CD4-positive, alpha-beta memory T cell (primary cell): ENCODE measurements at regions of chr17 and their contacts with region 1.

Region 1: DNA sequence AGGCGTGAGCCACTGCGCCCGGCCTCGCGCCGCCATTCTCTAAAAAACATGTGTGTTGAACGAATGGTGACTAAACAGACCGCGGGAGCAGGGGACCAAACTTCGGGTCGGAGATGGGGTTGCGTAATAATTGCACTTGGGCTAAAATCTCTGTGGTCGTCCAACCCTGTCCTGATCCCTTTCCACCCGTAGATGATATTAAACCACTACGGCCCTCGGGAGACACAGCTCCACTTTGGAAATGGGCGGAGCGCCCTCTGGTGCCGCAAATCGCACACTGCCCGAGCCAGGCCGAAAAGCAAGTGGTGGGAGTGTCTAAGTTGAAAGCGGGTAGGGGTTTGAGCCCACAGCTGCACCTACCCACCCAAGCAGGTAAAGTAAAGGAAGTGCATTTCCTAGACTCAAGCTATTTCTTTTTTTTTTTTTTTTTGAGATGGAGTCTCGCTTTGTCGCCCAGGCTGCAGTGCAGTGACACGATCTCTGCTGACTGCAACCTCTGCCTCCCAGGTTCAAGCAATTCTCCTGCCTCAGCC is 17.0 kb downstream of the CAVIN1 start:
- DNase-seq: peak; percentile 76 to 81 (median 79)
- H3K4me3 ChIP-seq: no peak overlapping the region
- H3K4me3 Mint-ChIP-seq: no peak overlapping the region
- H3K27ac ChIP-seq: no peak overlapping the region
- H3K27ac Mint-ChIP-seq: peak overlapping the region in 6 of 7 donors; percentile 19 to 68 (median 38)
- H3K4me1 ChIP-seq: peaks cover 4% of the 10 kb centered on the region
- H3K4me1 Mint-ChIP-seq: peaks cover 8 to 17% (median 10%) of the 10 kb centered on the region in 4 donors
- H3K27me3 ChIP-seq: no peaks in the 10 kb centered on the region
- H3K27me3 Mint-ChIP-seq: no peaks in the 10 kb centered on the region

Region 2: DNA sequence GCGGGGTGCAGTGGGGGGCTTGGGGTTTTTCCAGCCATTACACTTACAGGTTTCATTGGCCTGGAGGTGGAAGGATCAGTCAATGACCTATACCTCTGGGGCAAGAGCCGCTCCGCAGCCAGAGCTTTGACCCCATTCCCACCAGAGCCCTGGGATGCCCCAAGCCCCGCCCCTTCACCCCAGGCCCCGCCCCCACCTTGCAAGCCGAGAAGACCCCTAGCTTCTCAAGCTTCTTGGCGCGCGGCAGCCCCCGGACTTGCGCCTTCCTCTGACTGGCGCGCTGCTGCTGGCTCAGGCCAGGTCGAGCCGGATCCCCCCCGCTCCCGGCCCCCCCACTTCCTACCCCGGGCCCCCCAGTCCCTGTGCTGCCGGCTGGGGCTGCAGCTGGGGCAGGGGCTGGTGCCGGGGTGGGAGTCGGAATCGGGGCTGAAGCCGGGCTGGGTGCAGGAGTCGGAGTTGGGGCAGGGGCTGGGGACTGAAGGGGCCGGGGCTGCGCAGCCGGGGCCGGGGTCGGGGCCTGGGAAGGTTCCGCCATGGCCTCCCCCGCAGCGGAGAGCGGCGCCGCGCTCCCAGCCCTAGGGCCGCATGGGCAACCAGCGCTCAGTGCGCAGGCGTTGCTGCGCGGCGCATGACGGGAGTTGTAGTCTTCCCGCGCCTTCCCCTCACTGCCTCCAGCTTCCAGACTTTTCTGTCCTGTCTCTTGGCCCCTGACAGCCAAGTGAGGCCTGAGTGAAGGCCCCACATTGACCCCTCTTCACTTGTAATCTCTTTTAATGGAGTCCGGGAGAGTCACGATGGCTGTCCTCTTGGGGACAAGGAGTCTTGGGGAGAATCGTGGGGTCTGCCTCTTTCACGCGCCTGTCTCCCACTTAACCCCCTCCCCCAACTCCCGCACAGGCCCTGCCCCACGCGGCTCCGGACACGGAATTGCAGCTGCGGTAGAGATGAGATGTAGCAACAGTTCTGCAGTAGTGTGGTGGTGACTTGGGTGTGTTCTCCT is 285.0 kb before region 1 on chr17 and contains the start of gene KAT2A:
- CTCF ChIA-PET with region 1: no interaction called
- POLR2A ChIA-PET with region 1: no interaction called
- intact Hi-C with region 1: loop called (anchors 2 kb)
- DNase-seq: peak; percentile 61 to 71 (median 68)
- H3K4me3 ChIP-seq: peak within 1 kb of the TSS in 1 of 2 donors; percentile 43
- H3K4me3 Mint-ChIP-seq: peak within 1 kb of the TSS; percentile 72 to 82 (median 77)
- H3K27ac ChIP-seq: peak within 1 kb of the TSS; percentile 49
- H3K27ac Mint-ChIP-seq: peak within 1 kb of the TSS in 6 of 7 donors; percentile 19 to 81 (median 67)
- H3K4me1 ChIP-seq: peaks cover 11% of the 10 kb centered on the region
- H3K4me1 Mint-ChIP-seq: peaks cover 13 to 34% (median 23%) of the 10 kb centered on the region in 4 donors
- H3K27me3 ChIP-seq: no peaks in the 10 kb centered on the region
- H3K27me3 Mint-ChIP-seq: no peaks in the 10 kb centered on the region
- total RNA-seq, gene KAT2A: 38.5 to 39.9 TPM

Region 3: GRCh38 chr17:42183741-42184711 is 222.0 kb before region 1 on chr17:
- CTCF ChIA-PET with region 1: no interaction called
- POLR2A ChIA-PET with region 1: no interaction called
- intact Hi-C with region 1: no loop called
- DNase-seq: peak; percentile 74 to 84 (median 75)
- H3K4me3 ChIP-seq: peak overlapping the region; percentile 63 to 86
- H3K4me3 Mint-ChIP-seq: peak overlapping the region; percentile 87 to 96 (median 91)
- H3K27ac ChIP-seq: peak overlapping the region; percentile 72
- H3K27ac Mint-ChIP-seq: peak overlapping the region; percentile 78 to 94 (median 88)
- H3K4me1 ChIP-seq: peaks cover 56% of the 10 kb centered on the region
- H3K4me1 Mint-ChIP-seq: peaks cover 21 to 52% (median 35%) of the 10 kb centered on the region in 4 donors
- H3K27me3 ChIP-seq: no peaks in the 10 kb centered on the region
- H3K27me3 Mint-ChIP-seq: peaks cover 0 to 5% of the 10 kb centered on the region in 2 donors

Region 4: DNA sequence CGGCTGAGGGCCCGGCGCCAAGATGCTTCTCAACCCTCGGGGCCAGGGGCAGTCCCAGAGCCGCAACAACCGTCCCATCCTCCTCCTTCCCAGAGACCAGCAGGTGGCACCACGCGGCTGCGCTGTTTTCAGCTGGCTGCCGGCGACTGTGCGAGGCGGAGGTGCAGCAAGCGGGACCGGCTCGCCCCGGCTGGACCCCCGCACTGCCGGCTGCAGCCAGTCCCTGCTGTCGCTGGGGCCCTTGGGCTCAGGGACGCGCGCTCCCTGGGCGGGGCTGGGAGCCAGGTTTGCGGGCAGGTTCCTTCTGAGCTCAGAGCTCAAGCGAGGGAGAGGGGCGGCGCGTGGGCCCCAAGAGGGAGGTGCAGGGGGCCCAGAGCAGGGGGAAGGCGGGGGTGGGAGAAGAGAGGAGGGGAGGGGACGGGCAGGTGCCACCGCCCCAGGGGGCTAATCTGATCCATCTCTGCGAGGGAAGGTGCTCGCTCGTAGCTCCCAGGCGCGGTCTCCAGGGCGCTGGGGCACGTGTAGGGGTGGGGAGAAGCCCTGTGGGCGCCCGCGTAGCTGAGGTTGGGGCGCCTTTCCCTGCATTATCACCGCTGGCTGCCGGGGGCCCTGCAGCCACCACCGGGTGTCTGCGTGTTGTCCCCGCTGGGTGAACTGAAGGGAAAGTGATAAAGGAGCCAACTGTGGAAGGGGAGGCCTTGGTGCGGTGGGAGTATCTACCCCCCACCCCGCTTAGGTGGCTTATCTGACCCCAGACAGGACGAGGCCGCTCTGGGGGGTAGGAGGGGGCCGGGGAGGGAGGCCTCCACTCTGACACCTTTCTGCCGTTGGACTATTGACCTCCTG is 93.5 kb before region 1 on chr17:
- CTCF ChIA-PET with region 1: interaction called, 504 read pairs
- POLR2A ChIA-PET with region 1: interaction called, 16 read pairs
- intact Hi-C with region 1: no loop called
- DNase-seq: peak; percentile 69 to 80 (median 73)
- H3K4me3 ChIP-seq: peak overlapping the region in 1 of 2 donors; percentile 11
- H3K4me3 Mint-ChIP-seq: peak overlapping the region; percentile 37 to 80 (median 70)
- H3K27ac ChIP-seq: peak overlapping the region; percentile 46
- H3K27ac Mint-ChIP-seq: peak overlapping the region; percentile 75 to 89 (median 86)
- H3K4me1 ChIP-seq: peaks cover 70% of the 10 kb centered on the region
- H3K4me1 Mint-ChIP-seq: peaks cover 40 to 75% (median 53%) of the 10 kb centered on the region in 4 donors
- H3K27me3 ChIP-seq: no peaks in the 10 kb centered on the region
- H3K27me3 Mint-ChIP-seq: no peaks in the 10 kb centered on the region

Region 5: DNA sequence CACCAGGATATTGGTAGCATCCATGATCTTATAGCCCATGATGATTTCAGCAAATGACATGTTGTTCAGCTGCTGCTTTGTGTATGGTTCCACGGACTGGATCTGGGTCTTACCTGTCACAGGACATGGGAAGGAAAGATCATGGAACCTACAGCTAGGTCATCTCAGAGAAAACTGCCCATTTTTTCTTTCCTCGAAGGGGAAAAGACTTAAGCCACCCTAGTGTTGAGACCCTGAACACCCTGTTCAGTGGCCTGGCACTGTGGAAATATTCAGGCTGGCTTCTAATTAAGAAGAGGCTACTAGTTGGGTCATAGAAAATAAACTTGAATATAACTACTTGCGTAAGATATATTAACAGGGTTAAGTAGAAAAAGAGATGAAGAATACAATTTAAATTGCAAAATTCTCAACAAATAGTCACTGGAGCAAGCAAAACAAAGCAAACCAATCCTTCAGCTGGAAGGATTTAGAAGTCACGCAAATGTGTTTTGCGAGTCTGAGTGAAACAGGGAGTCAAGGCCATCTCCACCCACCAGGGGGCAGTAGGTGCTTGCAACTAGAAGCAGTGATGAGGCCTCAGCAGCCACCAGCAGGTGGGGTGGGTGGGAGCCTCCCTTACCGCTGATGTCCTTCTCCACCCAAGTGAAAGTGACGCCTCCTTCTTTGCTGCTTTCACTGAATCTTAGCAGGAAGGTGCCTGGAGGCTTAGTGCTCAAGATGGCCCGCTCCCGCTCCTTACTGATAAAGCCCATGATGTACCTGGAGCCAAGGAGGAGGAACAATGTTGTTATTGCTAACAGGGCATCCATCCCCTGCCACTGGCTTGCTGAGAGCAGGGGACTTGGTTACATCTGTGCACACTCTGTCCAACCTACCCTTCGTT is 83.4 kb before region 1 on chr17:
- CTCF ChIA-PET with region 1: interaction called, 504 read pairs
- POLR2A ChIA-PET with region 1: interaction called, 30 read pairs
- intact Hi-C with region 1: loop called (anchors 1 kb)
- DNase-seq: peak; percentile 91 to 95 (median 91)
- H3K4me3 ChIP-seq: no peak overlapping the region
- H3K4me3 Mint-ChIP-seq: peak overlapping the region in 1 of 8 donors; percentile 6
- H3K27ac ChIP-seq: no peak overlapping the region
- H3K27ac Mint-ChIP-seq: peak overlapping the region; percentile 68 to 94 (median 81)
- H3K4me1 ChIP-seq: peaks cover 24% of the 10 kb centered on the region
- H3K4me1 Mint-ChIP-seq: peaks cover 18 to 44% (median 29%) of the 10 kb centered on the region in 4 donors
- H3K27me3 ChIP-seq: no peaks in the 10 kb centered on the region
- H3K27me3 Mint-ChIP-seq: no peaks in the 10 kb centered on the region

Region 6: GRCh38 chr17:42436391-42436790 is 30.4 kb after region 1 on chr17:
- CTCF ChIA-PET with region 1: no interaction called
- POLR2A ChIA-PET with region 1: no interaction called
- intact Hi-C with region 1: no loop called
- DNase-seq: no peak
- H3K4me3 ChIP-seq: no peak overlapping the region
- H3K4me3 Mint-ChIP-seq: no peak overlapping the region
- H3K27ac ChIP-seq: no peak overlapping the region
- H3K27ac Mint-ChIP-seq: no peak overlapping the region
- H3K4me1 ChIP-seq: peaks cover under 1% of the 10 kb centered on the region
- H3K4me1 Mint-ChIP-seq: peaks cover 0 to 5% (median 1%) of the 10 kb centered on the region in 4 donors
- H3K27me3 ChIP-seq: no peaks in the 10 kb centered on the region
- H3K27me3 Mint-ChIP-seq: peaks cover 7% of the 10 kb centered on the region in 2 donors

Region 7: DNA sequence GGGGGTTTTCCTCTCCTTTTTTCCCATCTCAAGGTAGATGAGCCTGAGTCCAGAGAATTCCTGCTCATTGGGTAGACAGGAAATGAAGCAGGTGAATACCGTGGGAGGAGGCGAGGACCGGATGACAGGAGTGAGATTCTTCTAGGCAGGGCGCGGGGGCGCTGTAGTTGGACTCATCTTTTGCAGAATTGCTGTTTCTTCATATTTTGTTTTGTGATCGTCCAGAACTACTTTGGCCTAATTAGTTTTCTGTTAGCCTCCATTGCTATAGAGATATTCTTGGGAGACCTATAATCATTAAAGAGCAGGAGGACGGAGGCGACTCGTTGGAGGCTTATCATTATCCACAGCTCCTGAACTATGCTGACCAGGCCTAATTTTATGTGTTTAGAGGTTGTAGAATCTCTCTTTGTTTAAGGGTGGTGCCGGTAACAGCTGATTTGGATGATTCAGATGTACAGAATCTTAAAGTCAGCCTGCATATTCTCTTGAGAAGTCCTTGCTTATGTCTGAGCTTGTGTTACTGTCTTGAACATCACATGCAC is 53.3 kb after region 1 on chr17:
- CTCF ChIA-PET with region 1: no interaction called
- POLR2A ChIA-PET with region 1: no interaction called
- intact Hi-C with region 1: loop called (anchors 5 kb)
- DNase-seq: no peak
- H3K4me3 ChIP-seq: peak overlapping the region; percentile 56 to 67
- H3K4me3 Mint-ChIP-seq: peak overlapping the region; percentile 85 to 94 (median 91)
- H3K27ac ChIP-seq: peak overlapping the region; percentile 42
- H3K27ac Mint-ChIP-seq: peak overlapping the region; percentile 86 to 93 (median 90)
- H3K4me1 ChIP-seq: peaks cover 45% of the 10 kb centered on the region
- H3K4me1 Mint-ChIP-seq: peaks cover 31 to 43% (median 40%) of the 10 kb centered on the region in 4 donors
- H3K27me3 ChIP-seq: no peaks in the 10 kb centered on the region
- H3K27me3 Mint-ChIP-seq: no peaks in the 10 kb centered on the region